Dendritic cell treated with granulocyte-macrophage colony-stimulating factor and Interleukin-4, amounts not matched to agents 40 ng/mL and 50 ng/mL, for 4 days (primary cell): ENCODE measurements at regions of chr1 and their contacts with region 1.

Region 1: GRCh38 chr1:119367427-119368124 is 1.0 kb upstream of the HAO2 start:
- H3K4me3 Mint-ChIP-seq: no peak overlapping the region
- H3K27ac Mint-ChIP-seq: no peak overlapping the region
- H3K4me1 Mint-ChIP-seq: no peaks in the 10 kb centered on the region
- H3K27me3 Mint-ChIP-seq: no peaks in the 10 kb centered on the region

Region 2: DNA sequence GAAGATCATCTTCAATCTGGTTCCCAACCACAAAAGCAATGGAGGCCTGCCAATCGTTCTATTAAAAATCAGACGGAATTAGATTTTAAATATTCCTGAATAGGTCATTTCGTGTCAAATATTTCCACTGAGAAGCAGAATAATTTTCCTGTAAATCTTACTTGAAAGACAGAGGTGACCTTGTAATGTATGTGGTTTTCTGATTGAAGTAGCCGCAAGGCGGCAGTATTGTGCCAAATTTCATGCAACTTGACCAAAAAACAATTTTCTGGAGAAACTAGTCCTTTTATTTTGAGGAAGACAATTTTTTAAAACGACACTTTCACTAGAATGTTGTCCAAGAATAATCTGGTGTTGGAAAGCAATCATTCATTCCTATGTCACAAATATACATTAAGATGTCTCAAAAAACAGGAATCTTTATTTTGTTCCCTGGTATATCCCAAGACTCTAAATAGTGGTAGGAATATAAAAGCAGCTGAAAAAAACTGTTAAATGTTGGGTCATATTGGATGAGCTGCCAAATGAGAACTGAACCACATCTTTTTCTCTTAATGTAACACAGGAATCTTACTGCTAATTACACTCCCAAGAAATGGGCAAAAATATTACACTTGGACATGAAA is 1216.2 kb before region 1 on chr1:
- intact Hi-C with region 1: loop called (anchors 10 kb)
- H3K4me3 Mint-ChIP-seq: no peak overlapping the region
- H3K27ac Mint-ChIP-seq: no peak overlapping the region
- H3K4me1 Mint-ChIP-seq: no peaks in the 10 kb centered on the region
- H3K27me3 Mint-ChIP-seq: peaks cover 1% of the 10 kb centered on the region

Region 3: DNA sequence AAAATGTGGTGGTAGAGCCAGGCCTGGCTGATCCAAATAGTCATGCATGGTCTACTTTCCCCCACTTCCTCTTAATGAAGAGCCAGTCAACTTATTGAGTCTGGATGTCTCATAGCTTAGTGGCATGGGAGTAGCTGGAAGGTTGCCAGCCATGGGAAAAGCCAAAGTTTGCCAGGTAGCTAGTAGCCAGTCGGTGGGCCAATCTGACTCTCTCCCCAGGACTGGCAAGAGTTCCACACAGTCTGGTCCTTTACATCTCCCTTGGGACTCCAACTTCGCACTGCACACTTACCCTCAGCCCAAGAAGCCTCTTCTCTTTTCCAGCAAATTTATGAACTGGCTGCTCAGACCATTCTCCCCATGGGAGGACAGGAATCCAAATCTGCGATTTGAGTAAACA is 235.4 kb before region 1 on chr1:
- intact Hi-C with region 1: no loop called
- H3K4me3 Mint-ChIP-seq: no peak overlapping the region
- H3K27ac Mint-ChIP-seq: no peak overlapping the region
- H3K4me1 Mint-ChIP-seq: no peaks in the 10 kb centered on the region
- H3K27me3 Mint-ChIP-seq: no peaks in the 10 kb centered on the region

Region 4: DNA sequence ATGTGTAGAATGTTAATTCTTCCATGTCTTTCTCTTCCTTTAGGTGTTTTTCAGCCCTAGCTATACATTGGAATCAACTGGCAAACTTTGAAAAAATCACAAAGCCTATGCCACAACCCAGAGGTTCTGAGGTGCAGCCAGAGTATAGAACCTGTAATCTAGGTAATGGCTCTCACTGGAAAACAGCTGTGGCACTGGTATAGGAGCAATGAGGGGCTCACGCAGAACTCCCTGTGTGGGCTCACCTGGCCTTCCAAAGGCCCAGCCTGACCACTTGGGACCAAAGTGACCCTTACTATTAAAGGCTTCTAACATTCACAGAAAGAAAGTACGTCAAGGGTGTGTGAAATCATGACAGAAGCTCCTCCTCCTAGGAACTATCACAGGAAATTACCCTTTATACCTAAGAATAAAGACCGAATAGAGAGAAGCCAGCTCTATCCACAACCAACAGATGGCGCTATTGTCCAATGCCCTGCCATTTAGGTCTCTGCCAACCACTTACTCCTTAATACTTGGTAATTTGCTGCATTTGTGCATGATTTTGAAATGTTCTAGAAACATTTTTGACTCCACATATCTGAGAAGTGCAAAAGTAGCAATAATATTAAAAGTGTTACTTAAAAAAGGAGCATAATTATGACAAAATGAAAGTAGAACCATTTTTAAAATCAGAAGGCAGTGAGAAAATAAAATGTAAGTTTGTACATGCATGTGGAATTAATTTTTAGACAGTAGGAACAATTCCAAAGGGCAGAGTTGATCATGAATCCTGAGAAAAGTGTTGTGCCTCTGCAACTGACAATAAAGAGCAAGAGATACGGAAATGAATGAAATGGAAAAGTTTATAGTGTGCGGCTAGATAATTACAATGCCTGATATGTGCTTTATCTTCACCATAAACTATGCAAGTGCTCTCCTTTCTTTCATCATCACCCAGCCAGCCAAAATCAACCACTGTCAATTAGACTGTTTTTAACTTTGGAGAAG is 92.1 kb before region 1 on chr1:
- intact Hi-C with region 1: loop called (anchors 1 kb)
- H3K4me3 Mint-ChIP-seq: no peak overlapping the region
- H3K27ac Mint-ChIP-seq: no peak overlapping the region
- H3K4me1 Mint-ChIP-seq: no peaks in the 10 kb centered on the region
- H3K27me3 Mint-ChIP-seq: peaks cover 8% of the 10 kb centered on the region

Region 5: DNA sequence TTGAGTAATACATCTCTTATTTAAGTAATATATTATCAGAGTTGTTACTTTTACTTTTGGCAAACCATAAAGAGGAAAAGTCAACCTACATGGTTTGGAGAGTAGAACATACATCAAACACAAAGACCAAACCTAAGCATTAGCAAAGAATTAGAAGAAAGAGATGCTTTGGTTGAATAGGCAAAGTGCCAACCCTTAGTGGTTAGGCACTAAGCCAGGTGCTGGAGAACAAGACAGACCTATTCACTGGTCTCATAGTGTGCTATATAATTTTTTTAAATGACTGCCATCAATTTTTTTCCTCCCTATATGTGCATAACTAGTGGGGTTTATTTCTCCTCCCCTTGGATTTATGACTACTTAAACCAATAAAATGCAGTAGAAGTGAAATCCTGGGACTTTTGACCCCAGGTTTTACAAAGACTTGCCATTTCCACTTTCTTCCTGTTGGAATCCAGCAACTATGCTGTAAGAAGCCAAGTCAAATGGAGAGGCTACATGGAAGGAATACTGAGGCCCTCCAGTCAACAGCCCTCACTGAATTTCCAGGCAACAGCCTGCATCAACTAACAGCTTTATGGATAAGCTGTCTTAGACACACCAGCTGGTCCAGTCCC is 68.8 kb before region 1 on chr1:
- intact Hi-C with region 1: no loop called
- H3K4me3 Mint-ChIP-seq: no peak overlapping the region
- H3K27ac Mint-ChIP-seq: no peak overlapping the region
- H3K4me1 Mint-ChIP-seq: no peaks in the 10 kb centered on the region
- H3K27me3 Mint-ChIP-seq: peaks cover 14% of the 10 kb centered on the region